ENCODE measurements at regions of chr6 and their contacts with region 1.

Region 1: GRCh38 chr6:144104898-144105487 is 9.6 kb upstream of the SF3B5 start:
- DNase-seq: peak; percentile 48
- H3K4me3 Mint-ChIP-seq: no peak overlapping the region
- H3K27ac Mint-ChIP-seq: peak overlapping the region; percentile 56
- H3K4me1 Mint-ChIP-seq: peaks cover 8% of the 10 kb centered on the region
- H3K27me3 Mint-ChIP-seq: no peaks in the 10 kb centered on the region
- CTCF ChIP-seq: no peak

Region 2: GRCh38 chr6:144215932-144216667 is 111.1 kb after region 1 on chr6:
- CTCF ChIA-PET with region 1: interaction called, 3 read pairs
- intact Hi-C with region 1: loop called (anchors 2 kb)
- DNase-seq: peak; percentile 89
- H3K4me3 Mint-ChIP-seq: peak overlapping the region; percentile 80
- H3K27ac Mint-ChIP-seq: peak overlapping the region; percentile 99
- H3K4me1 Mint-ChIP-seq: peaks cover 16% of the 10 kb centered on the region
- H3K27me3 Mint-ChIP-seq: peaks cover under 1% of the 10 kb centered on the region
- CTCF ChIP-seq: peak; percentile 52

Region 3: GRCh38 chr6:144284783-144285547 is 180.0 kb after region 1 on chr6 and contains the start of gene UTRN:
- CTCF ChIA-PET with region 1: no interaction called
- intact Hi-C with region 1: loop called (anchors 1 kb)
- DNase-seq: peak; percentile 72
- H3K4me3 Mint-ChIP-seq: peak within 1 kb of the TSS; percentile 93
- H3K27ac Mint-ChIP-seq: peak within 1 kb of the TSS; percentile 67
- H3K4me1 Mint-ChIP-seq: no peaks in the 10 kb centered on the region
- H3K27me3 Mint-ChIP-seq: no peaks in the 10 kb centered on the region
- CTCF ChIP-seq: no peak
- total RNA-seq, gene UTRN: 89.4 and 109 TPM in 2 replicates

Region 4: DNA sequence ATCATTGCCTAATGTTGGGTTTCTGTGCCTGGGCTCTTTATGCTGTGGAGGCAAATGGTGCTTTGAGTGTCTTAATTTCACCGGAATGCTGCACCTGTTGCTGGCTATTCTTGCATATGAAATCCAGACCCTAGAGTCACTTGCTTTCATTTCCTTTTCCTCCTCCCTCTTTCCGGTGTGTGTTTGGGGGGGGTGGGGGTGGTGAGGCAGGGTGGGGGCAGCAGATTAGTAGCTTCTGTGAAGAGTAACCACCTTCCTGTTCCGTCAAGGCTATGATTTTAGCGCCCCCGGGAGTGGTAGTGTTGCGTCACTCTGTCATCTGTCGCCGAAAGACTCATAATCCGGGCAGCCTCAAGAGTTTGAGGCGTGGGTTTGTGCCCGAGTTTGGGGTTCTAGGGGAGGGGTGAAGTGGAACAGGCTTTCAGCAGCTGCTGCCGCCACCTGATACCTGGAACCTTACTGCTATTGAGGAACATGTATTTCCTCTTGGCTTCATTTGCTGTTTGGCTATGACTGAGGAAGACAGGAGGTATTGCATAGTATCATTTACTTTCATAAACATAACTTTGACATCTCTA is 229.2 kb after region 1 on chr6:
- CTCF ChIA-PET with region 1: no interaction called
- intact Hi-C with region 1: loop called (anchors 10 kb)
- DNase-seq: no peak
- H3K4me3 Mint-ChIP-seq: peak overlapping the region; percentile 40
- H3K27ac Mint-ChIP-seq: no peak overlapping the region
- H3K4me1 Mint-ChIP-seq: peaks cover 64% of the 10 kb centered on the region
- H3K27me3 Mint-ChIP-seq: no peaks in the 10 kb centered on the region
- CTCF ChIP-seq: no peak